Mucosa of descending colon (tissue), 3 donors: ENCODE measurements at regions of chr18 and their contacts with region 1.

Region 1: GRCh38 chr18:7281579-7281978 is 50.7 kb downstream of the LRRC30 start:
- DNase-seq: no peak
- ATAC-seq: no peak
- H3K4me3 ChIP-seq: no peak overlapping the region
- H3K4me1 ChIP-seq: no peaks in the 10 kb centered on the region
- CTCF ChIP-seq: no peak

Region 2: DNA sequence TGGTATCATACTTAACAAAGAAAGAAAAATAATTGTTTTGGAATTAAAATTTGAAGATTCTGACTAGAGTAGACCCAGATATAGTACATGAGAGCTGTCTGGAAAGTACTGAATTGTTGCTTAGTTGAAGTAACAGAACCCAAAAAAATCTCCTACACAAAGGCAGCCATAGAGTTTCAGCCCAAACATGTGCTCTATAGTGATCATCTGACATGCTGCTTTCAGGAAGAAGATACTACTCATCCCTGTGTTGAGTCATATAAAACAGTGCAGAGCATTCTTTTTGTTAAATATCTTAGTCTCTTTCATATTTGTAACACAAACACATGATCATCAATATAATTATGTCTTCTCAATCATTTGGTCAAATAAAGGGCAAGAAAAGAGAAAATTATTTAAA is 200.8 kb after region 1 on chr18:
- intact Hi-C with region 1: no loop called
- DNase-seq: no peak
- ATAC-seq: no peak
- H3K4me3 ChIP-seq: no peak overlapping the region
- H3K4me1 ChIP-seq: no peaks in the 10 kb centered on the region
- CTCF ChIP-seq: no peak

Region 3: GRCh38 chr18:7566567-7567473 is 285.2 kb after region 1 on chr18 and contains the start of gene PTPRM:
- intact Hi-C with region 1: loop called in 1 of 2 experiments (anchors 10 kb)
- DNase-seq: peak; percentile 66 to 80 (median 69)
- ATAC-seq: peak; percentile 95
- H3K4me3 ChIP-seq: peak within 1 kb of the TSS; percentile 30
- H3K4me1 ChIP-seq: no peaks in the 10 kb centered on the region
- CTCF ChIP-seq: peak; percentile 55
- total RNA-seq, gene PTPRM: 15.3 to 41.1 (median 19.6) TPM